Activated T-helper 1 cell treated with anti-CD3 and anti-CD28 coated beads, Interleukin-12 subunit alpha, Interleukin-12 subunit beta, Interleukin-2, Interleukin-4 antibody, amounts not matched to agents 30 ng/mL and 10 ng/mL and 1 ng/mL, durations not matched to agents 14 hours and 24 hours and 36 hours (primary cell): ENCODE measurements at regions of chr11 and their contacts with region 1.

Region 1: DNA sequence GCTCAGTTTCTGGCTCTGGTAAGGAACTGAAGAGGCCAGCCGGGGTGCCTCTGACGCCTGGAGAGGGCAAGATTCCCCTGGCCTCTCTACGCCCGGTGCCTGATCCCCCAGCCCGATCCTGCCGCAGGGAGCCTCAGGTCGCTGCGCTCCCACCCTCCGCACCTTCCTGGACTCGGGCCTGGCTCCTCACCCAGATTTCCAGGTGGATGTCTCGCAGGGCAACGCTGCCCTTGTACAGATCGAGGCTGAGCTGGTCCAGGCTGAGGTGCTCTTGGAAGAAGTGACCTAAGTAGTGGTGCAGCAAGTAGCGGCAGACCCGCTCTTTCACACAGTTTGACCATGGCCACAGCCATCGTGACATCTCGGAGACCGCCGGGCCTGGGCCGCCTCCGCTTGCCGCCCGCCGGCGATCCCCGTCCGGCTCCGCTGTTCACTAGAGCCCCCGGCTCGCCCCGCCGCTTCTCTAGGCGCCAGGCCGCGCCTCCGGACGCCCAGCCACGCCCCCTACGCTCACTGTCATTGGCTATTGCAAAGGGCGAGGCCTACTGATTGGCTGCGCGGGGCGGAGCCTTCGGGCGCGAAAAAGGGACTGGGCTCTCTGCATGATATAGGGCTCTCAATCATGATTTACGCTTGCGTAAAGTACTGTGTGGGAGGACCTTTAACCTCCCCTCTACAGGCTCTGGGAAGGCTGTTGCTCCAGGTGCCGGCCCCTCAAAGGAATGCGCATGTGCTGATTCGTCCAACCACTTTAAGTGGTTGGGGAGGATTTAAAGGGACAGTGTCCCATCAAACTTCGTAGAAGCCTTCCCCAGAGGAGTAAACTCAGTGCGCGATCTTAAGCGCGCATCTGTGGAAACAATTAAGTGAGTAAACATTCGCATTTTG is at the start of gene ATG2A:
- DNase-seq: peak; percentile 99
- H3K4me3 Mint-ChIP-seq: peak within 1 kb of the TSS; percentile 88
- H3K27ac Mint-ChIP-seq: peak within 1 kb of the TSS; percentile 82
- H3K4me1 Mint-ChIP-seq: peaks cover 20% of the 10 kb centered on the region
- H3K27me3 Mint-ChIP-seq: no peaks in the 10 kb centered on the region
- total RNA-seq, gene ATG2A: 24.6 and 24.9 TPM in 2 replicates

Region 2: GRCh38 chr11:64810271-64810890 is 106.6 kb before region 1 on chr11 and contains the start of gene MEN1:
- intact Hi-C with region 1: loop called (anchors 1 kb)
- DNase-seq: peak; percentile 67
- H3K4me3 Mint-ChIP-seq: peak within 1 kb of the TSS; percentile 95
- H3K27ac Mint-ChIP-seq: peak within 1 kb of the TSS; percentile 89
- H3K4me1 Mint-ChIP-seq: peaks cover 22% of the 10 kb centered on the region
- H3K27me3 Mint-ChIP-seq: peaks cover 5% of the 10 kb centered on the region
- total RNA-seq, gene MEN1: 39.6 and 43.8 TPM in 2 replicates

Region 3: GRCh38 chr11:64878494-64879243 is 38.4 kb before region 1 on chr11 and contains the start of gene EHD1:
- intact Hi-C with region 1: loop called (anchors 1 kb)
- DNase-seq: peak; percentile 99
- H3K4me3 Mint-ChIP-seq: peak within 1 kb of the TSS; percentile 99
- H3K27ac Mint-ChIP-seq: peak within 1 kb of the TSS; percentile 83
- H3K4me1 Mint-ChIP-seq: peaks cover 64% of the 10 kb centered on the region
- H3K27me3 Mint-ChIP-seq: no peaks in the 10 kb centered on the region
- total RNA-seq, gene EHD1: 88.0 and 96.9 TPM in 2 replicates

Region 4: GRCh38 chr11:64990222-64990923 is 73.4 kb after region 1 on chr11:
- intact Hi-C with region 1: no loop called
- DNase-seq: no peak
- H3K4me3 Mint-ChIP-seq: no peak overlapping the region
- H3K27ac Mint-ChIP-seq: no peak overlapping the region
- H3K4me1 Mint-ChIP-seq: peaks cover 6% of the 10 kb centered on the region
- H3K27me3 Mint-ChIP-seq: peaks cover 6% of the 10 kb centered on the region

Region 5: GRCh38 chr11:65013692-65014145 is 96.7 kb after region 1 on chr11:
- intact Hi-C with region 1: loop called (anchors 1 kb)
- DNase-seq: peak; percentile 83
- H3K4me3 Mint-ChIP-seq: peak overlapping the region; percentile 90
- H3K27ac Mint-ChIP-seq: peak overlapping the region; percentile 99
- H3K4me1 Mint-ChIP-seq: peaks cover 22% of the 10 kb centered on the region
- H3K27me3 Mint-ChIP-seq: peaks cover 2% of the 10 kb centered on the region

Region 6: DNA sequence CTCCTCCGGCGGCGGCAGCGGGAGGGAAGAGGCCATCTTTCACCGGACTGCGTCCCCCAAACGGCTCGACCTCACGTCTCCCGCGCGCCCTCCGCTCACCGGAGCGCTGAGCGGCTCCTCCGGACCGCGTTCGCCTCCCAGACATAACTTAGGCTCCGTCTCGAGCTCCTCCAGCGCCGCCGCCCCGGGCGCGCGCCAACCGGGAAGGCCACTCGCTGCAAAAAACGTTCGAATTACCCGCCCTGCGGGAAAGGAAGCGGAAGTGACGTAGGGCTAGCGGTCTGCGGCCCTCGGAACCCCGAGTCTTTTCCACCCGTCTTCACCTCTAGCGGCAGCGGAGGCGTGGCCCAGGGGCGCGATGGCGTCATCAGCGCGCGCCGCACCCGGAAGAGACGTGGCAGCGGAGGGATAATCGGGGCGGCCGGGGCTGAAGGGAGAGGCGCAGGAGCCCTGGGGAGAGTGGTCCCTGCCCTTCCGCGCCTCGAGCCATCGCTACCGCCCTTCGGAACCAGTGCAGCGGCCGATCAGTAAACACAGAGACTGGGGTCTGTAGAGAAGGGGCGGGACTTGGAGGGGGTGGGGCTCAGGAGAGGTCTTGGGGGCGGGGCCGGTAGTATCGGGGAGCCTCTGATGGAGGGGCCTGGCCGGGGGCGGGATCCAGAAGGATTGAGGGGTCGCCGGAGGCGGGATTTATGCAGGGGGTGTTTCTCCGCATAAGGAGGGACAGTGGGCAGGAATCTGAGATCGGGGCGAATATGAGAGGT is 167.0 kb after region 1 on chr11 and contains the starts of genes CDCA5 and ZFPL1:
- intact Hi-C with region 1: loop called (anchors 1 kb)
- DNase-seq: peak; percentile 96
- H3K4me3 Mint-ChIP-seq: peak within 1 kb of the TSS; percentile 98
- H3K27ac Mint-ChIP-seq: peak within 1 kb of the TSS; percentile 97
- H3K4me1 Mint-ChIP-seq: peaks cover 59% of the 10 kb centered on the region
- H3K27me3 Mint-ChIP-seq: no peaks in the 10 kb centered on the region
- total RNA-seq, gene CDCA5: 91.8 and 92.5 TPM in 2 replicates
- total RNA-seq, gene ZFPL1: 31.9 and 34.5 TPM in 2 replicates

Region 7: GRCh38 chr11:65261591-65262380 is 344.8 kb after region 1 on chr11 and contains the start of gene POLA2:
- intact Hi-C with region 1: loop called (anchors 2 kb)
- DNase-seq: peak; percentile 97
- H3K4me3 Mint-ChIP-seq: peak within 1 kb of the TSS; percentile 94
- H3K27ac Mint-ChIP-seq: peak within 1 kb of the TSS; percentile 97
- H3K4me1 Mint-ChIP-seq: peaks cover 47% of the 10 kb centered on the region
- H3K27me3 Mint-ChIP-seq: no peaks in the 10 kb centered on the region
- total RNA-seq, gene POLA2: 78.2 and 78.9 TPM in 2 replicates